Ovary (tissue), 10 donors: ENCODE measurements at regions of chr16 and their contacts with region 1.

Region 1: GRCh38 chr16:19555162-19555937 is at the start of gene VPS35L:
- DNase-seq: peak; percentile 97 to 99 (median 99)
- H3K4me3 ChIP-seq: peak within 1 kb of the TSS; percentile 80
- H3K27ac ChIP-seq: peak within 1 kb of the TSS; percentile 70 to 86
- H3K4me1 ChIP-seq: peaks cover 6% of the 10 kb centered on the region
- H3K27me3 ChIP-seq: no peaks in the 10 kb centered on the region
- CTCF ChIP-seq: peak; percentile 74 to 85 (median 78)
- EP300 ChIP-seq: no peak
- POLR2A ChIP-seq: no peak
- total RNA-seq, gene VPS35L: 28.6 to 63.0 (median 50.7) TPM

Region 2: DNA sequence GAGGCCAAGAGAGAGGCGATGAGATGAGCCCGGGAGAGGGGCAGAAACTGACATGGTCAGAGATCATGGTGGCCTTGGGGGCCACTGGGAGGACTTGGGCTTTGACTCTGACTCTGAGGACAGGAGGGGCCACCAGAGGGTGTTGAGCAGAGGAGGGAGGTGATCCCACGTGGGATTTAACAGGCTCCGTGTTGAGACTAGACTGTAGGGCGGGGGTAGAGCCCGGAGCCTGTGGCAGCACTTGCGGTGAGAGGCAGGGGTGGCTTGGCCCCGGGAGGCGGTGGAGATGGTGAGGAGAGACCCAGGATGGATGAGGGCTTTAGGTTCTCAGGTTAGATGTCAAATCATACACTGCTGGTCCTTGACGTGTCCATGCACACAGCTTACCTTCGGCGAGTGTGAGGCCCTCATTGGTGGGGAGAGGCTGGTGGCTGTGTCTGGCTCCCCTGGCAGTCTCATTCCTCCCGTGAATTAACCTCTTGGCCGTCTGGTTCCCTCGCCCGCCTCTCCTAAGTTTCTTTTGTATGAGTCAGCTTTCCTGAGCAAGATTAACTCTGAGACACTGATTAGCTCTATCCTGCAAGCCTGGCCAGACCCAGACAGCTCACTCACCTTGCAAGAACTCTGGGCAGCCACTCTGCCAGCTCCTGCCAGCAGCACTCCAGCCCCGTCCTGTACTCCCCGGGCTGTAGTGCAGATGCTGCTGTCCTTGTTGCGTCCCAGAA is 39.9 kb after region 1 on chr16:
- intact Hi-C with region 1: loop called in 1 of 4 experiments (anchors 5 kb)
- DNase-seq: peak in 3 of 5 donors; percentile 21 to 28 (median 23)
- H3K4me3 ChIP-seq: no peak overlapping the region
- H3K27ac ChIP-seq: no peak overlapping the region
- H3K4me1 ChIP-seq: peaks cover 6% of the 10 kb centered on the region
- H3K27me3 ChIP-seq: no peaks in the 10 kb centered on the region
- CTCF ChIP-seq: no peak
- EP300 ChIP-seq: no peak
- POLR2A ChIP-seq: no peak

Region 3: DNA sequence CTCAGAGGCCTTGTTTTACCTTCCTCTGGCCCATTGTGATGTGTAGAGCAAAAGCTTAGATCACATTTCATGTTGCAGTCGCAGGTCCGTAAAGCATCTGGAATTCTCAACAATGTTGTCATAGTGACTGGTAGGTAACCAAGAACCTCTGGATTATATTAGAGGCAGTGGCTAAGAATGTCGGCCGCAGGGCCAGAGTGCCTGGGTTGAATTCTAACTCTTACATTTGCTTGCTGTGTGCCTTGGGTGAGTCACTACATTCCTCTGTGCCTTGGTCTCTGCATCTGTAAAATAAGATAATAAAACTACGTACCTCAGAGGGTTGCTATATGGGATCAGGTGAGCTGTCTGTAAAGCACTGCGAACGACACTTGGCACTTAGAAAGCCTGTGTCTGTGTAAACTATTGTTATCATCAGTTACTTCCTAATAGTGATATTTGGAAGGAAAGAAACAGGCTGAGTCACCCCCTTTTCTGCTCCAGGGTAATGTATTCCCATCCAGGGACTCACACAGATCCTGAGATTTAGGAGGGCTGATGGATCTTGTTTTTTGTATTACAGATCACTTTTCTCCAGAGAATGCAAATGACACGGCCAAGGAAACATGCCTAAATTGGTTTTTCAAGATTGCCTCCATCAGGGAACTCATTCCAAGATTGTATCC is 52.4 kb after region 1 on chr16:
- intact Hi-C with region 1: no loop called
- DNase-seq: no peak
- H3K4me3 ChIP-seq: no peak overlapping the region
- H3K27ac ChIP-seq: no peak overlapping the region
- H3K4me1 ChIP-seq: peaks cover 2% of the 10 kb centered on the region
- H3K27me3 ChIP-seq: no peaks in the 10 kb centered on the region
- CTCF ChIP-seq: no peak
- EP300 ChIP-seq: no peak
- POLR2A ChIP-seq: no peak